ENCODE measurements at regions of chr10 and their contacts with region 1.

Region 1: DNA sequence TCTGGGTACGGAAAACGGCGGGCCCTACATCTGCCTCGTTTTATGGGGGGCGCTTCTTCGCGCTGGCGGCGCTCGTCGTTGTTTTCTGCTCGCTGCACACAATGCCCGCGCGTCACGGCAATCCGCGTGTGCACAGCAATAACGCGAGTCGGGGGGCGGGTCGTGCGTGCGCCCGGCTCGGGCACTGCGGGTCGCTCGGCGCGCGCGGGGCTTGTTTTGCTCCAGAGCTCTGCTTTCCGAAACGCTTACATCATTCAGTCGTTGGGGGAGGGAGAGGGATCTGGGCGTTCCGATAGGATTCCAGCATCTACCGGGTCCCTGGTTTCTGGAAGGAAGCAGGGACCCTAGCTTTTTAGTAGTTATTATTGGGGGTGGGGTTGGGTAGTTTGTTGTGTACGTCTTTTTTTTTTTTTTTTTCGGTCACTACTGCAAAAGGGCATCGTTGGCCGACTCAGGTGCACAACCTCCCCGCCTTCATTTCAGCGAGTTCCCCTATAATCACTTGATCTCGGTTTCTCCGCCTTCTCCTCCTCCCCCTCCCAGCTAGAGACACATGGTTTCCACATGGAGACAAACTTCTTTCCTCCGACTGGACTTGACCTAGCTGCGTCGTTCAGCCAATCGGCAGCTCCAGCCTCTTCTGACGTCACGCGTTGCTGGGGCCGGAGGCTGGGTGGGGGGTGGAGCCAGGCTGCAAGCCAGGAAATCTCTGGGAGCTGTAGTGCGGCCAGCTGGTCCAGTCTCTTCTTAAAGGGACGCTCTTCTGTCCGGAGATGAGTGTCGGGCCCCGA is 3.5 kb downstream of the MXI1 start:
- DNase-seq: peak; percentile 97
- H3K4me3 Mint-ChIP-seq: peak overlapping the region; percentile 96
- H3K27ac Mint-ChIP-seq: peak overlapping the region; percentile 97
- H3K4me1 Mint-ChIP-seq: peaks cover 50% of the 10 kb centered on the region
- H3K27me3 Mint-ChIP-seq: peaks cover 3% of the 10 kb centered on the region

Region 2: GRCh38 chr10:109922976-109923921 is 287.6 kb before region 1 on chr10 and contains the start of gene XPNPEP1:
- CTCF ChIA-PET with region 1: no interaction called
- intact Hi-C with region 1: loop called (anchors 2 kb)
- DNase-seq: peak; percentile 86
- H3K4me3 Mint-ChIP-seq: peak within 1 kb of the TSS; percentile 84
- H3K27ac Mint-ChIP-seq: peak within 1 kb of the TSS; percentile 81
- H3K4me1 Mint-ChIP-seq: peaks cover 53% of the 10 kb centered on the region
- H3K27me3 Mint-ChIP-seq: no peaks in the 10 kb centered on the region
- total RNA-seq, gene XPNPEP1: 52.2 to 52.6 TPM

Region 3: DNA sequence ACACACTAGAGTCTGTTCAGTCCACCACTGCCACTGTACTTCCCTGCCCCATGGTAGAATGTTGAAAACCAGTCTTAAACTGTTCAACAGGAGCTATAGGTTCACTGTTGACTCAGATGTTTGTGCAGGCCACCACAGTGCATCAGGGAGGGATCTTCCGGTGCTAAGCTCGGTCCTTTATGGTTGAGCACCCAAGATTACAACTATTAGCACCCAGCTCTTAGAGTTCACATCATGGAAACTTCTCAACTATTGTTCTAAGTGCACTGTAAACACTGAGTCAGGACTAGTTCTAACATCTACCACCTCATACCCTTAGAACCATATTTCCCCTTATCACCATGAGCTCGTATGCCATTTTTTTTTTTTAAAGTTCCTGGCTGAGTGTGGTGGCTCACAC is 100.5 kb before region 1 on chr10:
- CTCF ChIA-PET with region 1: no interaction called
- intact Hi-C with region 1: no loop called
- DNase-seq: peak; percentile 33
- H3K4me3 Mint-ChIP-seq: no peak overlapping the region
- H3K27ac Mint-ChIP-seq: peak overlapping the region; percentile 74
- H3K4me1 Mint-ChIP-seq: peaks cover 38% of the 10 kb centered on the region
- H3K27me3 Mint-ChIP-seq: no peaks in the 10 kb centered on the region

Region 4: DNA sequence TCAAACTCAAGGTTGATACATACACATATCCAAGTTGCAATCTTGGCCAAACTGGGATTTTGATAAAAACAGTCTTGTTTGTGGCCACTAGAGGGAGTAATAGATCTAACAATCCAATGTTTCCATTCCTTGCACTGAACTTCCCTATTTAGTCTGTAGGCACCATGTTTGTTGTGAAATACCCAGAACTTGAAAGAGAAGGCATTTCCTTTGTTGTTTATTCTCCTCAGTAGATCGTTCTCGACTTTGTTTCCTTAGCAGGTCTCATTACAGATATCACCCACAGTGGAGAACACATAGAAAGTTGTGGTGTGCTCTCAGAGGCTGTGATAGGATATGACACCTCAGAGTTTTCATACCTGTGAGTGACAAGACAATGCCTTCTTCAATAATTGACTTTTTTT is 73.7 kb before region 1 on chr10:
- CTCF ChIA-PET with region 1: interaction called, 28 read pairs
- intact Hi-C with region 1: loop called (anchors 1 kb)
- DNase-seq: no peak
- H3K4me3 Mint-ChIP-seq: no peak overlapping the region
- H3K27ac Mint-ChIP-seq: peak overlapping the region; percentile 17
- H3K4me1 Mint-ChIP-seq: peaks cover 39% of the 10 kb centered on the region
- H3K27me3 Mint-ChIP-seq: no peaks in the 10 kb centered on the region

Region 5: DNA sequence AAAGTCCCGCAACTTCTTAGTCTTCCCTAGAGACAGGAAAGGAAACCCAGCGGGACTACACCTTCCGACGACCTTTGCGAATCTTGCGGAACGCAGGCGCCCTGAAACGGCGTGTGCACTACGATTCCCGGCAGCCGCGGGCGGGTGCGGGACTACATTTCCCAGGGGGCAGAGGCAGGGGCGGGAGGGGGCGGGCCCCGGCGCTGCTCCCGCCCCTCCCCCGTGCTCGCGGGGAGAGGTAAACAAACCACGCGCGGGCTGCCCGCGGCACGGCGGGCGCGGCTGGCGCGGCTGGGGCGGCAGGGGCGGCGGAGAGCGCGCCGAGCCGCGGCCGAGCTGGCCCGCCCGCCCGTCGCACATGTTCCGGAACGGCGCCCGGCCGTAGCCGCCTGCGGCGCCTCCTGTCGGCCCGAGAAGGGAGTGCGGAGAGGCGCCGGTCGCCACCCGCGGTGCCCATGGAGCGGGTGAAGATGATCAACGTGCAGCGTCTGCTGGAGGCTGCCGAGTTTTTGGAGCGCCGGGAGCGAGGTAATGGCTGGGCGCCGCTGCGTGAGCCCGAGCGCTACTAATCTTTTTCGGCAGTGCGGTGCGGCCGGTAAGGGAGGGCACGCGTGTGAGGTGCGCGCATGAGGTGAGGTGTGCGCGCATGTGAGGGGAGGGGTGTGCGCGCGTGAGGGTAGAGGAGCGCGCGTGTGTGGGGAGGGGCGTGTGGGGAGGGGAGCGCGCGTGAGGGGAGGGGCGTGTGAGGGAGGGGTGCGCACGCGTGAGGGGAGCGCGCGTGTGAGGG is 15.1 kb after region 1 on chr10:
- CTCF ChIA-PET with region 1: interaction called, 181 read pairs
- intact Hi-C with region 1: loop called (anchors 1 kb)
- DNase-seq: peak; percentile 93
- H3K4me3 Mint-ChIP-seq: peak overlapping the region; percentile 97
- H3K27ac Mint-ChIP-seq: peak overlapping the region; percentile 94
- H3K4me1 Mint-ChIP-seq: peaks cover 47% of the 10 kb centered on the region
- H3K27me3 Mint-ChIP-seq: no peaks in the 10 kb centered on the region

Region 6: GRCh38 chr10:110279407-110279986 is 68.6 kb after region 1 on chr10:
- CTCF ChIA-PET with region 1: interaction called, 93 read pairs
- intact Hi-C with region 1: loop called (anchors 1 kb)
- DNase-seq: peak; percentile 69
- H3K4me3 Mint-ChIP-seq: no peak overlapping the region
- H3K27ac Mint-ChIP-seq: no peak overlapping the region
- H3K4me1 Mint-ChIP-seq: peaks cover 18% of the 10 kb centered on the region
- H3K27me3 Mint-ChIP-seq: no peaks in the 10 kb centered on the region

Region 7: GRCh38 chr10:110567201-110568054 is 356.6 kb after region 1 on chr10 and contains the start of gene SMC3:
- CTCF ChIA-PET with region 1: no interaction called
- intact Hi-C with region 1: loop called (anchors 5 kb)
- DNase-seq: peak; percentile 95
- H3K4me3 Mint-ChIP-seq: peak within 1 kb of the TSS; percentile 87
- H3K27ac Mint-ChIP-seq: peak within 1 kb of the TSS; percentile 98
- H3K4me1 Mint-ChIP-seq: peaks cover 31% of the 10 kb centered on the region
- H3K27me3 Mint-ChIP-seq: peaks cover 5% of the 10 kb centered on the region
- total RNA-seq, gene SMC3: 81.3 to 85.0 TPM